Activated CD4-positive, alpha-beta T cell treated with anti-CD3 and anti-CD28 coated beads for 36 hours (primary cell): ENCODE measurements at regions of chr1 and their contacts with region 1.

Region 1: DNA sequence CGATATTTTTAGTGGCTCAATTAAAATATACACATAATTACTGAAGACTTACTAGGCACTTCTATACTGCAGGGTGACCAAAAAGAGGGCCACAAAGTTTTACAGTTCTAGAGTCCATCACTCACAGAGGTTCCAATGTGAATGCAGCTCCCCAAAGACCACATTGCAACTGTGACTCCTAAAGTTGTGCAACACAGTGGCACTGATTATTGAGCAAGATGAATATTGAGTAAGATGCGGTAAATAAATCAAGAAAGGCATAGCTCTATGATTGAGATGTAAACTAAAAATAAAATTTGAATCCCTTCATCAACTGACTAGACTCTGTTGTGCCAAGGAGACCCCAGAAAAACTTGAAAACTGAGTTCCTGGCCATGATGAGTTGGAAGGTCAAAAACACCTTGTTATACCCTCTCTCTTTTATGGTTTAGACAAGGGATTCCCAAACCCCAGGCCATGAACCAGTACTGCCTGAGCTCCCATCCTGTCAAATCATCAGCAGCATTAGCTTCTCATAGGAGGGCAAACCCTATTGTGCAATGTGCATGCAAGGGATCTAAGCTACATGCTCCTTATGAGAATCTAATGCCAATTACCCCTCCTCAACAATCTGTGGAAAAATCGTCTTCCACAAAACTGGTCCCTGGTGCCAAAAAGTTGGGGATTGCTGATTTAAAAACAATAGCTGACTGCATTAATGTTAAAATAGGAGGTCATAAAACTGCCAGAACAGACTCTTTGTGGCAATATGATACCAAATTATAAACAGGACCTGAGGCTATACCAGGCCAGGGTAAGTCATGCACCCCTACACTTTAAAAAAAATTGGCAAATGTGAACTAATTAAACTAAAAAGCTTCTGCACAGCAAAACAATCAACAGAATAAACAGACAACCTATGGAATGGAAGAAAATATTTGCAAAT is 94.3 kb downstream of the ADGRL4 start:
- DNase-seq: no peak
- ATAC-seq: no peak
- H3K4me3 Mint-ChIP-seq: no peak overlapping the region
- H3K27ac Mint-ChIP-seq: no peak overlapping the region
- H3K4me1 Mint-ChIP-seq: no peaks in the 10 kb centered on the region
- H3K27me3 Mint-ChIP-seq: no peaks in the 10 kb centered on the region

Region 2: GRCh38 chr1:78831731-78832360 is 80.4 kb before region 1 on chr1:
- CTCF ChIA-PET with region 1: no interaction called
- POLR2A ChIA-PET with region 1: no interaction called
- intact Hi-C with region 1: no loop called
- DNase-seq: no peak
- ATAC-seq: no peak
- H3K4me3 Mint-ChIP-seq: no peak overlapping the region
- H3K27ac Mint-ChIP-seq: no peak overlapping the region
- H3K4me1 Mint-ChIP-seq: peaks cover 17% of the 10 kb centered on the region
- H3K27me3 Mint-ChIP-seq: peaks cover 2% of the 10 kb centered on the region

Region 3: GRCh38 chr1:78884685-78885452 is 27.3 kb before region 1 on chr1:
- CTCF ChIA-PET with region 1: interaction called, 3 read pairs
- POLR2A ChIA-PET with region 1: no interaction called
- intact Hi-C with region 1: loop called in 1 of 2 experiments (anchors 2 kb)
- DNase-seq: no peak
- ATAC-seq: no peak
- H3K4me3 Mint-ChIP-seq: no peak overlapping the region
- H3K27ac Mint-ChIP-seq: no peak overlapping the region
- H3K4me1 Mint-ChIP-seq: no peaks in the 10 kb centered on the region
- H3K27me3 Mint-ChIP-seq: peaks cover 3% of the 10 kb centered on the region